Panc1 (cell line): ENCODE measurements at regions of chr6 and their contacts with region 1.

Region 1: DNA sequence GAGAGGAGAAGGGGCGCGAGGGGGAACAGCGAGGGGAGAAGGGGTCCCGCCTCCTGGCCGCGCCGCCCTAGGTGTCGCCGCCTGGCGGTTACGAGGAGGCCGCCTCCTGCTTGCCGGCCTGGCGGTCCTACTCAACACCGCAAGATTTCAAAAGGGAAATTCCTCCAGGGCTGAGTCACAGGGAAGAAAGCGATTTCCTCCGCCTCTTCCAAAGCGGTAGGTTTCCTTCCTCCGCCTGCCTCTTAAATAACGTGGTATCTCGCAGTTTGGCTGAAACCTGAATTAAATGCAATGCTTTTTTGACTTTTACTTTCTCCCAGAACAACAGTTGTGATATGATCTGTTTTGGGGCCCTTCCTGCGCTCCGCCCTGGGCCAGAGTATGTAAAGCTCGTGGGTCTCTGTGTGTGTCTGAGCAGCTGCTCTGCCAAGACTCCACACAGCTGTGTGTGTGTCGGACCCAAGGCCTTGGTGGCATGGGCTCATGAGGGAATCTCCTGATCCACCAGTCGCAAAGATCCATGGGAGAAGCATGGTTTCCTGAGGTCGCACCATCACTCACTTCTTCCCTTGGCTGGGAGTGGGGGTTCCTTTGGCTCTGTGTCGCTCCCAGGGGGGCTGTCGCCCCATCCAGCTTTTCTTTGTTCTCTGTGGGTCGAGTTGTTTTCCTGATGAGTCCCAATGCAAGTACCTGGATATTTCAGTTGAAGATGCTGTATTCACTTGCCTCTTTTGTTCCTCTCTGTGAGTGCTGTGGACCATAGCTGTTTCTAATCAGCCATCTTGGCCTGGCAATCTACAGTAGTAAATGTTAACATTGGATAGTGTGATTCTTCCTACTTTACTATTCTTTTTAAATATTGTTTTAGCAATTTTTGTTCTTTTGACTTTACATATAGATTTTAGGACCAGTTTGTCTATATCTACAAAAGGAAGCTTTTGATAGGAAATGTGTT is 31.6 kb upstream of the NOTCH4 start:
- DNase-seq: peak; percentile 63
- ATAC-seq: peak; percentile 99
- H3K4me3 ChIP-seq: peak overlapping the region; percentile 47 to 61
- H3K27ac ChIP-seq: peak overlapping the region; percentile 98
- H3K4me1 ChIP-seq: peaks cover 8% of the 10 kb centered on the region
- H3K27me3 ChIP-seq: no peaks in the 10 kb centered on the region
- CTCF ChIP-seq: peak; percentile 83

Region 2: DNA sequence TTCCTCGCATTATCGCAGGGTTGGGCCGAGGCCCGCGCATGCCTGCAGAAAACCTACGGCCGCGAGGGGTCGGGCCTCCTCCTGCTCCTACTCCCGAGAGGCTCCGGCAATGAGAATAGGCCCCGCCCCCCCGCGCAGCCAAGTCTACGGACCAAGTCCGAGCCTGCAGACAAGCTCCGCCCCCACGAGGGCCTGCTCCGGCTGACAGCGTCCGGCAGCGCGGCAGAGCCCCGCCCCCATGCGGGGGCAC is 59.9 kb before region 1 on chr6:
- CTCF ChIA-PET with region 1: interaction called, 10 read pairs
- POLR2A ChIA-PET with region 1: no interaction called
- in situ Hi-C with region 1: no loop called
- intact Hi-C with region 1: no loop called
- DNase-seq: peak; percentile 92
- ATAC-seq: no peak
- H3K4me3 ChIP-seq: peak overlapping the region; percentile 86 to 94; a peak in 3 of 4 replicates
- H3K27ac ChIP-seq: peak overlapping the region; percentile 99; the same call in 1 of the 2 replicates
- H3K4me1 ChIP-seq: peaks cover 33% of the 10 kb centered on the region
- H3K27me3 ChIP-seq: no peaks in the 10 kb centered on the region
- CTCF ChIP-seq: no peak

Region 3: GRCh38 chr6:32853541-32854375 is 598.3 kb after region 1 on chr6 and contains the starts of genes PSMB9 and TAP1:
- CTCF ChIA-PET with region 1: interaction called, 11 read pairs
- POLR2A ChIA-PET with region 1: no interaction called
- in situ Hi-C with region 1: no loop called
- intact Hi-C with region 1: no loop called
- DNase-seq: peak; percentile 90
- ATAC-seq: peak; percentile 96
- H3K4me3 ChIP-seq: peak within 1 kb of the TSS; percentile 77 to 79
- H3K27ac ChIP-seq: peak within 1 kb of the TSS; percentile 92
- H3K4me1 ChIP-seq: peaks cover 9% of the 10 kb centered on the region
- H3K27me3 ChIP-seq: no peaks in the 10 kb centered on the region
- CTCF ChIP-seq: peak; percentile 94
- total RNA-seq, gene PSMB9: 41.5 TPM
- total RNA-seq, gene TAP1: 74.7 TPM